CD14-positive monocyte (primary cell): ENCODE measurements at regions of chr3 and their contacts with region 1.

Region 1: GRCh38 chr3:13452490-13453335 is 27.4 kb upstream of the HDAC11 start:
- DNase-seq: peak; percentile 31 to 62 (median 40)
- H3K4me3 ChIP-seq: peak overlapping the region; percentile 7 to 76 (median 60)
- H3K4me3 Mint-ChIP-seq: peak overlapping the region; percentile 82 to 97
- H3K27ac ChIP-seq: peak overlapping the region; percentile 71
- H3K27ac Mint-ChIP-seq: peak overlapping the region; percentile 85 to 95 (median 92)
- H3K4me1 ChIP-seq: peaks cover 21 to 24% of the 10 kb centered on the region in 2 donors
- H3K4me1 Mint-ChIP-seq: peaks cover 24% of the 10 kb centered on the region
- H3K27me3 ChIP-seq: no peaks in the 10 kb centered on the region
- H3K27me3 Mint-ChIP-seq: peaks cover 0 to 2% (median 1%) of the 10 kb centered on the region in 3 donors
- CTCF ChIP-seq: peak; percentile 79

Region 2: DNA sequence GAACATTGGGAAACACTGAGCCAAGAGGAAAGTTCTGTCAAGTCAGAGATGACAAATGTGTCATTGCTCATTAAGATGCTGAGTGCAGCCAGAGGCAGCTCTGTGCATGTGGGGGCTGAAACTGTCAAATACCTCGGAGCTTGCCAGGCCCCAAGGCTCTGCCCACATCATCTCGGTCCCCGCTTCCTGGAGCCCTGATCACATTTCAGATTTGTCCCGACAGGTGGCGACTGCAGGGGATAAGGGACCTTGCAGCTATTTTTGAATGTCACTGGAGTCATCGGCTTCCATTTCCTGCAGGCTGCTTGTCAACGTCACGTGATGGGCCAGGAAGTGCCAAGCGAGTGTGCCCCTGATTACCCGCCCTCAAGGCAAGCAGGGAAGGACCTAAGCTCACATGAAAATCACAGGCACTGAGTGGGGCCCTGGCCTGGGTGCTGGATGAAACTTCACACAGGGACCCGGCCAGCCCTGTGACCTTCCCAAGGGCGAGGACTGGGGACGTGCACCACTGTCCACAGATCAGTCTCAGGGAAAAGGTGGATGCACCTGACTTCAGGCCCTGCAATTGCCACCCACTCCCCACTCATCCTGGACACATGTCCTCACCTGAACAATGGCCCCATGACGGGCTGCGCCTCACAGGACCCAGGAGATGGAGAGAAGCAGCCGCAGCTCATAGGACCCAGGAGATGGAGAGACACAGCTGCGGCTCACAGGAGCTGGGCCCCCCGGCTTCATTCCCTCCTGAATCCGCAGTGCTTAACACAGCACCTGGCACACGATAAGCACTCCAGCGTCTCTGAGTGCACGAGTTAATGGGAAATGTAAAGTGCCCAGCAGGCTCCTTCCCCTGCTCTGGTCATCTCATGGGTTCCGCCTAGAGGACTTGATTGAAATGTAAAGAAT is 106.0 kb before region 1 on chr3:
- intact Hi-C with region 1: loop called (anchors 2 to 5 kb)
- DNase-seq: peak; percentile 52 to 77 (median 56)
- H3K4me3 ChIP-seq: no peak overlapping the region
- H3K4me3 Mint-ChIP-seq: no peak overlapping the region
- H3K27ac ChIP-seq: peak overlapping the region; percentile 22 to 59
- H3K27ac Mint-ChIP-seq: peak overlapping the region in 6 of 7 donors; percentile 32 to 85 (median 66)
- H3K4me1 ChIP-seq: peaks cover 18 to 20% of the 10 kb centered on the region in 2 donors
- H3K4me1 Mint-ChIP-seq: peaks cover 31% of the 10 kb centered on the region
- H3K27me3 ChIP-seq: no peaks in the 10 kb centered on the region
- H3K27me3 Mint-ChIP-seq: no peaks in the 10 kb centered on the region
- CTCF ChIP-seq: peak; percentile 47

Region 3: DNA sequence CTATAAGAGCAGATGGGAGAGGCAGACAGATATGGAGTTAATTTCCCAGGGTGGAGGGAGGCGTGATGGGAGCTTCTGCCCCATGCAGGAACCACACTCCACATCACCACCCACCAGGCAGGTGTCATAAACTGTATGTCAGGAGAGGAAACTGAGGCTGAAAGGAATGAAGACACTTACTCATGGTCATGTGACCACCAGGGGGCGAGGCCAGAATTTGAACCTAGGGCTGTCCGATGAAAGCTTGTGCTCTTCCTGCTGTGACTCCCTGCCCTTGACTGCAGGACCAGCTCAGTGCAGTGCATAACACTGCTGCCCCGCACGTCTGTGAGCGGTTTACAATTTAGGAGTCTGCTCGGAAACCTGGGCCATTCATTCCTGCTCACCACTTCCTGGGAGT is 61.4 kb before region 1 on chr3:
- intact Hi-C with region 1: loop called in 1 of 2 experiments (anchors 5 kb)
- DNase-seq: peak in 2 of 3 donors; percentile 30 to 31
- H3K4me3 ChIP-seq: no peak overlapping the region
- H3K4me3 Mint-ChIP-seq: no peak overlapping the region
- H3K27ac ChIP-seq: peak overlapping the region in 1 of 2 donors; percentile 47
- H3K27ac Mint-ChIP-seq: peak overlapping the region in 4 of 7 donors; percentile 75 to 87 (median 76)
- H3K4me1 ChIP-seq: peaks cover 6 to 7% of the 10 kb centered on the region in 2 donors
- H3K4me1 Mint-ChIP-seq: peaks cover 11% of the 10 kb centered on the region
- H3K27me3 ChIP-seq: no peaks in the 10 kb centered on the region
- H3K27me3 Mint-ChIP-seq: no peaks in the 10 kb centered on the region
- CTCF ChIP-seq: peak; percentile 53

Region 4: DNA sequence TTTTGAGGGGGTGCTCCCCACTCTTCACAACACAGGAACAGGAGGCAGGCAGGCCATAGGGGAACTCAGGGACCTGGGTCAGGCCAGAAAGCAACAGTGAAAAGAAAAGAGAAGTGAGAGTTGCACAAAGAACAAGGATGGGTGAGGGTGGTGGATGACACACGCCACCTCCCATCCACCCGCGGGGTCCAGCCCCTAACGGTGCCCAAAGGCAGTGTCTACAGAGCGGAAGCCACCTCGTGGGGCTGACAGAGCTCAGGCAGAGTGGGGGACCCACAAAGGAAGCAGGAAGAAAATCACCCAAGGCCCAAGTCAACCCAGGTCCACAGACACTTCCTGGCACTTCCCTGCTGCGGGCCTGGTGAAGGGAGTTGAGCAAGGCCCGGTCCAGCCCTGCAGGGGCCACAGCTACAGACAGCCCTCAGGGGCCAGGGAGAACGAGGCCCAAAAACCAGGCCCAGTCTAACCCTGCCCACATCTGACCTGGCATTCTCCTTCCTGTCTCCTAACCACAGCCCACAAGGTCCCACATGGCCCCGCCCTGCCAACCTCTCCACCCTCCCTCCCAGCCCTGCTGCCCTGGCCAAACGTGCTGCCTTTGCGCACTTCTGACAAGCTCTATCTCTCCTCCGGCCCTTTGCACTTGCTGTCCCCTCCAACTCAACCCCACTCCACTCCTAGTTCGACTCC is 38.5 kb before region 1 on chr3:
- intact Hi-C with region 1: loop called (anchors 2 to 5 kb)
- DNase-seq: peak; percentile 97
- H3K4me3 ChIP-seq: peak overlapping the region in 1 of 3 experiments; percentile 60
- H3K4me3 Mint-ChIP-seq: peak overlapping the region; percentile 68 to 84
- H3K27ac ChIP-seq: peak overlapping the region; percentile 90 to 95
- H3K27ac Mint-ChIP-seq: peak overlapping the region; percentile 99 to 100 (median 99)
- H3K4me1 ChIP-seq: peaks cover 74 to 79% of the 10 kb centered on the region in 2 donors
- H3K4me1 Mint-ChIP-seq: peaks cover 72% of the 10 kb centered on the region
- H3K27me3 ChIP-seq: no peaks in the 10 kb centered on the region
- H3K27me3 Mint-ChIP-seq: peaks cover 0 to 2% (median 0%) of the 10 kb centered on the region in 3 donors
- CTCF ChIP-seq: no peak

Region 5: DNA sequence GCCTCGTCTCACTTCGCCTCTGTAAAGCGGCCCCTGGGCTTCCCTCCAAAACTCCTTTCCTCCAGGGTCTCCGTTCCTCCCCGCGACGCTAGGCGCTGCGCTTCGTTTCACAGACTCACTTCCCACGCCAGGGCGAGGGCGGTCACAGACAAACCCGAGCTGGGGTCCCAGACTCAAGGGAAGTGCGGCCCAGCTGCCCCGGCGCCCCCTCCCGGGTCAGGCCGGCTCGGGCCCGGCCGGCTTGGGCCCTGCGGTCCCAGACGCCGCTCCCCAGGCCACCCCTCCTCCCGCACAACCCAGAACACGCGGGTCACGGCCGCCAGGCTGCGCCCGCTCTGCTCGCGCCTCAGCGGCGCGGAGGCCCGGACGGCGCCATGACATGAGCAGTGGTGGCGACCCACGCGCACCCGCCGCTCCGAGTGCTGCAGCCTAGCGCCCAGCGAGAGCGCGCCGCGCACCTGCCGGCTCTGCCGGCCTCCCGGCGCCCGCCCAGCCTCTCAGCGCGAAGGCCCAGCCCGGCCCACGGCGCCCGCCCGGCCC is 33.1 kb before region 1 on chr3:
- intact Hi-C with region 1: loop called (anchors 2 to 5 kb)
- DNase-seq: peak; percentile 55 to 63 (median 59)
- H3K4me3 ChIP-seq: peak overlapping the region; percentile 53 to 84 (median 69)
- H3K4me3 Mint-ChIP-seq: peak overlapping the region; percentile 85 to 95
- H3K27ac ChIP-seq: peak overlapping the region; percentile 87 to 95
- H3K27ac Mint-ChIP-seq: peak overlapping the region; percentile 87 to 99 (median 94)
- H3K4me1 ChIP-seq: peaks cover 62 to 65% of the 10 kb centered on the region in 2 donors
- H3K4me1 Mint-ChIP-seq: peaks cover 62% of the 10 kb centered on the region
- H3K27me3 ChIP-seq: no peaks in the 10 kb centered on the region
- H3K27me3 Mint-ChIP-seq: peaks cover 0 to 2% (median 1%) of the 10 kb centered on the region in 3 donors
- CTCF ChIP-seq: no peak

Region 6: GRCh38 chr3:13483988-13484695 is 31.4 kb after region 1 on chr3:
- intact Hi-C with region 1: no loop called
- DNase-seq: no peak
- H3K4me3 ChIP-seq: no peak overlapping the region
- H3K4me3 Mint-ChIP-seq: no peak overlapping the region
- H3K27ac ChIP-seq: no peak overlapping the region
- H3K27ac Mint-ChIP-seq: peak overlapping the region in 2 of 7 donors; percentile 21 to 30
- H3K4me1 ChIP-seq: peaks cover 36 to 48% of the 10 kb centered on the region in 2 donors
- H3K4me1 Mint-ChIP-seq: peaks cover 41% of the 10 kb centered on the region
- H3K27me3 ChIP-seq: no peaks in the 10 kb centered on the region
- H3K27me3 Mint-ChIP-seq: peaks cover 0 to 10% (median 1%) of the 10 kb centered on the region in 3 donors
- CTCF ChIP-seq: no peak

Region 7: DNA sequence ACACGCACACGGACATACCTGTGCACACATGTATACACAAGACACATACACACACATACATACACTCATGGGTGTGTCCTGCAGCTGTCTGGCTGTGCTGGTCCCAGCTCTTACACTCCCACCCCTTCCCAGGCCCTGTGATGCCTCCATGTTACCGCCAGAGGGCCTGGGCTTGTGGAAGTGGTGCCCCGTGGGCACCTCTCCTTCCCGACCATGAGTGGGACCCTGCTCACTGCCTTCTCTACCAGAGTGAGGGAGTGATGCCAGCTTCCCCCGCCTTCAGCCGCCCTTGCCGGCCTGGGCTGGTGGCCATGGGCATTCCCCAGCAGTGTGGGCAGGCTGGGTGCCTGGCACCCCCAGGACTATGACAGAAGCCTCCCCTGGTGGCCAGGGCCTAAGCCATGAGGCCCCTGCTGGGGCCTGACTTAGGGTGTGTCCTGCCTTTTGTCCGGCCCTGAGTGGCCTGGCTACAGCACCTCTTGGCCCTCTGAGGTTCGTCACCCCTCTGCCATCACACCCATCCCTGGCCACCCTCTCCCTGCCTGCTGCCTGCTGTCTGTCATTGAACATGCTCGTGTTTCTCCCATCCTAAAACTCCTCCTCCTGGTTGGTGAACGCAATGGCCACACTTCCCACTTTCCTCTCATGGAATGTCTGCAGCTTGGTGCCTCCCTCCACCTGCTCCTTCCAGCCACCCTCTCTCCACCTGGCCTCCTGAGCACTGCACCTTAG is 41.9 kb after region 1 on chr3:
- intact Hi-C with region 1: no loop called
- DNase-seq: no peak
- H3K4me3 ChIP-seq: no peak overlapping the region
- H3K4me3 Mint-ChIP-seq: no peak overlapping the region
- H3K27ac ChIP-seq: no peak overlapping the region
- H3K27ac Mint-ChIP-seq: peak overlapping the region in 2 of 7 donors; percentile 32 to 35
- H3K4me1 ChIP-seq: peaks cover 0 to 9% of the 10 kb centered on the region in 2 donors
- H3K4me1 Mint-ChIP-seq: peaks cover 8% of the 10 kb centered on the region
- H3K27me3 ChIP-seq: no peaks in the 10 kb centered on the region
- H3K27me3 Mint-ChIP-seq: peaks cover 0 to 1% (median 0%) of the 10 kb centered on the region in 3 donors
- CTCF ChIP-seq: peak; percentile 29

Region 8: DNA sequence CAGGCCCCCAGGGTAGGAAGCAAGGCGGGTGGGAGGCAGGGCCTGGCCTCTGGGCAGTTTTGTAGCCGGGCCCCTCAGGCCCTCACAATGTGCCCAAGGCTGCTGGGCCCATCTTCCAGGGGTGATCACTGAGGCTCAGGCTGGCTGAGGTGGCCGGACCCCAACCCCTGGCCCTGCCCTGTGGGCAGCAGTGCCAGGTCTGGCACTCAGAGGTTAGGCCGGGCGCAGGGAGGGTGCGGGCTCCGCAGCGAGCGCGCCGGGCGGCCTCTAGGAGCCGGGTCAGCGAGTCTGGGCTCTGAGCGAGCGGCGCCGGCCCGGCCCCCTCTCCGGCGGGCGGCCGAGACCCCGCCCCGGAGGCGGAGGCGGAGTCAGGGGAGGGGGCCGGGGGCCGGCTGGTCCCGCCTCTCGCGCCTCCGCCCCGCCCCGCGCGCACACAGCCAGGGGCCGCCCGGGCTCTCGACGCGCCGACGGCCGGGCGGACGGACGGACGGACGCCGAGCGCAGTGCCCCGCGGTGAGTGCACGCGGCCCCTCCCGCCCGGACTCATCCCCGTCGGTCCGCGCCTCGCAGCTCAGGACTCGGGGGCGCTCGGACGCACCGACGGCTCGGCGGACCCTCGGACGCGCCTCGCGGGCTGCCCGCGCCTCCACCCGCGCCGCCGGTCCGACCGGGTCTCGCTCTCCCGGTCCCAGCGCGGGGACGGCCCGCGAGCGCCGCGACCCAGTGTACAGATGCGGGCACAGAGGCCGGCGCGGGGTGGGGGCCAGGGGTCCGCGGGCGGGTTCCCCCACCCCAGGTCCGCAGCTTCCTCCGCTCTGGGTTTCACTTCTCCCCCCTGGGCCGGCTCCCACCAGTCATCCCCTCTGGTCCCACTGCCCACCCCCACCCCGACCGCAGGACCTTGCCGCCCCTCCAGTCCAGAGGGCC is 96.2 kb after region 1 on chr3 and contains the start of gene FBLN2:
- intact Hi-C with region 1: no loop called
- DNase-seq: no peak
- H3K4me3 ChIP-seq: no peak within 1 kb of the TSS
- H3K4me3 Mint-ChIP-seq: peak within 1 kb of the TSS; percentile 52 to 81
- H3K27ac ChIP-seq: no peak within 1 kb of the TSS
- H3K27ac Mint-ChIP-seq: no peak within 1 kb of the TSS
- H3K4me1 ChIP-seq: peaks cover 3 to 13% of the 10 kb centered on the region in 2 donors
- H3K4me1 Mint-ChIP-seq: peaks cover 10% of the 10 kb centered on the region
- H3K27me3 ChIP-seq: peaks cover 8 to 28% of the 10 kb centered on the region in 2 donors
- H3K27me3 Mint-ChIP-seq: peaks cover 24 to 40% (median 28%) of the 10 kb centered on the region in 3 donors
- CTCF ChIP-seq: no peak
- polyA plus RNA-seq, gene FBLN2: 0.08 TPM in 1 of 3 donors, not detected in the others